ENCODE measurements at regions of chr12 and their contacts with region 1.

Region 1: GRCh38 chr12:69254046-69254445 is 14.7 kb downstream of the CPSF6 start:
- DNase-seq: no peak
- ATAC-seq: peak; percentile 71

Region 2: DNA sequence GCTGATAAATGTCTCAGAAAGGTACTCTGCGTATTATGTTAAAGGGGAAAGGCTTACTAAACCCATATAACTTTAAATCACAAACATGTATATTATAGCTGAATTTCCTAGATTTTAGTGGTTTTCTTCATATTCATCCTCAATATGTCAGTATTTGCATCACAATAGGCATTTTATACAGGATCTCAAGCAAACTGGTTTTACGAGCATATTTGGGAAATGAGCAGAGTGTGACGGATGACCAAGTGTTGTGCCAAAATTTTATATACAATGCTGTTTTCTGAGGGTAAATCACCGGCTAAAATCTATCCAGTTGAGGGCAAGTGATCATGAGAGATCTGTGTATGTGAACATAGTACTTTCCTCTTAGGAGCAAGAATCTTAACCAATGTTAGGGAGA is 329.5 kb before region 1 on chr12:
- intact Hi-C with region 1: no loop called
- DNase-seq: no peak
- ATAC-seq: no peak

Region 3: GRCh38 chr12:69157023-69157655 is 96.9 kb before region 1 on chr12:
- intact Hi-C with region 1: loop called in 1 of 2 experiments (anchors 10 kb)
- DNase-seq: peak; percentile 84 to 94
- ATAC-seq: peak; percentile 91

Region 4: DNA sequence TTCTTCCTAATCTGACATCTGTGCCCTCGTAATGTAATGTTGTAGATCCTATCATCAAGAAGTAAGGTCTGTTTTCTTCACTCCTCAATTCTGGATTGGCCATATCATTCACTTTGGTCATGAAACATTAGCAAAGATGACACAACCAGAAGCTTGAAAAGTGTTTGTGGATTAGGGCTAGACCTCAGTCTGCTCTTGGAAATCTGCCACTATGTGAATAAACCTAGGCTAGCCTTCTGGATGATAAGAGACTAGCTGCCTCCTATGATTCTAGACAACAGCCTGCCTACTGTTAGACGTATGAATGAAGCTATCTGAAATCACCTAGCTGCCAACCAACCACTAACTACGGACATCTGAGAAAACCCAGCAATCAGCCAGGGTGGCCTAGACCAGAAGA is 55.4 kb after region 1 on chr12:
- intact Hi-C with region 1: no loop called
- DNase-seq: no peak
- ATAC-seq: no peak

Region 5: DNA sequence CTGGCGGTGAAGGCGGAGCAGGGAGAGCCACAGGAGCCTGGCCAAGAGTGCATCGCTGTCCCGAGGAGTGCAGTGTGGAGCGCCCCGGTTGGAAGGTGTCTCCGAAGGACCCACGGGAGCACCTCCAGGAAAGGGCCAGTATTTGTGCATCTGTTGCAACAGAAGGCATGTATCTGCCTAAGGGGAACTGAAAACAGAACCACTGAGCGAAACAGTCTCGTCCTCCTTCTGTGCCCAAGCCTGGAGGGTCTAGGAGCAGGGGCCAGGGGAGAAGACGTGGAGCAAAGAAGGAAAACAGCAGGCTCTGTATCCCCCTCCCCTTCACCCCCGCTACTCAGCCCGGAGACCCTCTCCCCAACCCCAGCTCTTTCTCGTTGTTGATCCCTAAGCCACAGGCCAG is 362.0 kb after region 1 on chr12:
- intact Hi-C with region 1: no loop called
- DNase-seq: no peak
- ATAC-seq: no peak

Measured in left colon (tissue), 2 donors.